Body of pancreas (tissue), 4 donors: ENCODE measurements at regions of chr1 and their contacts with region 1.

Region 1: DNA sequence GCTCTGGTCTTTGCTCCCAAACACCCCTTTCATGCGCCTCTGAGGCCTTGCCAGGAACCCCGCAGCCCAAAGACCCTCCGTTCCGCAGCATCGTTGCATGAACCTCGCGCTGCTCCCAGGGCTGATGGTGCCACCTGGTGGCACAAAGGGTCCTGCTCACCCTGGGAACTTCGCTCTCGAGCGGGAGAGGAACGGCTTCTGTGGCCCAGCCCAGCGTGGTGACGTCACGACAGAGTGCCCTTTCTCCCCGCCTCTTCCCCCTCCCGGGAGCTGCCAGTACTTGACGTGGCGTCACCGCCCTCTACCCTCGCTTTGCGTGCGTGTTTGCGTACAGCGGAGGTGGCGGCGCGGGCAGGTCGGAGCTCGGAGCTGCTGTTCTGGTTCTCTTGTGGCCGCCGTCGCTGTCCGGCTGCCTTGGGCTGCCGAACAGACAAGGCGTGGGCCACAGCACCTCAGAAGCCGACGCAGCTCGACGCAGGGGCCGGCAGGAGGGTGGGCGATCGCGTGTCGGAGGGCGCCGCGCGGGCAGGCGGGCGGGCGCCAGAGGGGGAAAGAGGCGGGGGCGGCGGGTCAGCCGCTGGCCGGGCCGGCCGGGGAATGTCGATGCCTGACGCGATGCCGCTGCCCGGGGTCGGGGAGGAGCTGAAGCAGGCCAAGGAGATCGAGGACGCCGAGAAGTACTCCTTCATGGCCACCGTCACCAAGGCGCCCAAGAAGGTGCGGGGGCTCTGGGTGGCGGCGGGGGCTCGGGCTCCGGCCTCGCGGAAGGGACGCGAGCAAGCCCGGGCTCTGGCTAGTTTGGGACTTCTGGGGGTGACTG is at the start of gene AHCYL1:
- DNase-seq: peak; percentile 100
- ATAC-seq: peak; percentile 97
- H3K4me3 ChIP-seq: peak within 1 kb of the TSS; percentile 39 to 46
- H3K27ac ChIP-seq: peak within 1 kb of the TSS; percentile 95 to 98 (median 96)
- H3K4me1 ChIP-seq: peaks cover 50% of the 10 kb centered on the region
- H3K27me3 ChIP-seq: no peaks in the 10 kb centered on the region
- CTCF ChIP-seq: peak; percentile 94 to 100 (median 99)
- POLR2A ChIP-seq: peak; percentile 95 to 99 (median 97)
- total RNA-seq, gene AHCYL1: 38.4 to 61.6 TPM

Region 2: DNA sequence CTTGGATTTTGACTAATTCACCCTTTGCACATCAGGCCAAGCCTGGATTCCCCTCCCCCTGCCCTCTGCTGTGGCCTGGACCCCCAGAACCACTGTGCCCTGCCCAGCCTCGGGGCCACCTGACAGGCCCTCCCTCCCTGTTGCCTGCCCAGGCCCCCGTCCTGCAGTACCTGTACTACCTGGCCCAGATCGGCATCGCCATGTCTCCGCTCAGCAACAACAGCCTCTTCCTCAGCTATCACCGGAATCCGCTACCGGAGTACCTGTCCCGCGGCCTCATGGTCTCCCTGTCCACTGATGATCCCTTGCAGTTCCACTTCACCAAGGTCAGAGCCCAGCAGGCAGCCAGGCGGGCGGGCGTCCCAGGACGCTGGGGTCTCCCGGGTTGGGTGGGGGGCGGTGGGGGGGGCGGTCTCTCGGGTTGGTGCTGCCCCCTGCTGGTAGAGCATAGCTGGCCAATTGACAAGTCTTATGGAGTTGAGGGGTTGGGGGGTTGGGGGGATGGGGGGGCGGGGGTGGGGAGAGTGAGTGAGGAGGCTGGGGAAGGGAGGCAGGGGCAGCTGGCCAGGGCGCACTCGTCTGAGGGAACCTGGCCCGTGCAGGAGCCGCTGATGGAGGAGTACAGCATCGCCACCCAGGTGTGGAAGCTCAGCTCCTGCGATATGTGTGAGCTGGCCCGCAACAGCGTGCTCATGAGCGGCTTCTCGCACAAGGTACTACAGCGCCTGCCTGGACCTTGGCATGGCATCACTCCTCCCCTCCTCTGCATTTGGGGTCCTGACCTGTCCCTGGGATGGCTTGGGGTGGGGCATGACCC is 354.4 kb before region 1 on chr1:
- intact Hi-C with region 1: loop called (anchors 10 kb)
- DNase-seq: peak in 1 of 4 donors; percentile 57
- ATAC-seq: no peak
- H3K4me3 ChIP-seq: no peak overlapping the region
- H3K27ac ChIP-seq: no peak overlapping the region
- H3K4me1 ChIP-seq: no peaks in the 10 kb centered on the region
- H3K27me3 ChIP-seq: no peaks in the 10 kb centered on the region
- CTCF ChIP-seq: peak in 3 of 7 experiments; percentile 32 to 43 (median 33)
- POLR2A ChIP-seq: no peak

Region 3: DNA sequence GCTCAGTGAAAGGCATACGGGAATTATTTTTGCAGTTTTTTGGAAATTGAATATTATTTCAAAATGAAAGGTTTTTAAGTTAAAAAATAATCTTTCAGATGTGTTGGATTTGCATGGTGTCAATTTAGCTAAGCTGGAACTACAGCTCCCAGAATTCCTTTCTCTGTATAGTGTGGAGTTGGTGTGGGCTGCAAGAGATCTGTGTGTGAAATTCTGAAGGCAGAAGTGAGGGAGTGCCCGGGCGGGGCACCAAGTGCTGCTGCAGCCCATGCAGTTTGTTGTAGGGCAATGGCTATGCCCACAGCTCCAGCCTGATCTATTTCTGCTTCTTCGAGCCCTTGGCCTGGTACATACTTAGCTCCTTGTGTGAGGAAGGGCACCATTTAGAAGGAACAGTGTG is 134.5 kb before region 1 on chr1:
- intact Hi-C with region 1: no loop called
- DNase-seq: no peak
- ATAC-seq: no peak
- H3K4me3 ChIP-seq: no peak overlapping the region
- H3K27ac ChIP-seq: no peak overlapping the region
- H3K4me1 ChIP-seq: no peaks in the 10 kb centered on the region
- H3K27me3 ChIP-seq: no peaks in the 10 kb centered on the region
- CTCF ChIP-seq: no peak
- POLR2A ChIP-seq: no peak

Region 4: DNA sequence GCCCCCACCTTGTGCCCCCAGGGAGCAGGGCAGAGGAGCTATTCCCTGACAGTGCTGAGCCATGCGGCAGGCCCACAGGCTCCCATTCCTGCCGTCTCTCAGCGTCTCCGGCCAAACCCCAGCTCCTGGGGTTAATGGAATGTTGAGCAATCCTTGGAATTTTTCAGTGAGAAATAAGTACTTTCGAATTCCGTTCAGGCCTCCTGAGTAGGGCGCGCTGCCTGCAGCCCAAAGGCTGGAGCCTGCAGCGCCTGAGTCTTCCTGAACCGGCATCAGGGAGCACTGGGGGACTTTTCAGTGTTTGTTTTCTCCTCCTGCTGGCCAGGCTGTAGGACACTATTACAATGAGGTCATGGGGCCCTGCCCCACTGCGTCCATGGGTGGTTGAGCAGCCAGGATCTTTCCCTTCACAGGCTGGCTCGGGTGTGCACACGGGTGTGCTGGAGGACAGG is 107.3 kb before region 1 on chr1:
- intact Hi-C with region 1: no loop called
- DNase-seq: peak; percentile 42 to 66 (median 60)
- ATAC-seq: peak; percentile 81
- H3K4me3 ChIP-seq: no peak overlapping the region
- H3K27ac ChIP-seq: peak overlapping the region; percentile 48 to 89 (median 81)
- H3K4me1 ChIP-seq: peaks cover 19% of the 10 kb centered on the region
- H3K27me3 ChIP-seq: no peaks in the 10 kb centered on the region
- CTCF ChIP-seq: peak in 4 of 7 experiments; percentile 24 to 43 (median 34)
- POLR2A ChIP-seq: peak in 2 of 3 donors; percentile 25 to 48